A673 (cell line): ENCODE measurements at regions of chr12 and their contacts with region 1.

Region 1: DNA sequence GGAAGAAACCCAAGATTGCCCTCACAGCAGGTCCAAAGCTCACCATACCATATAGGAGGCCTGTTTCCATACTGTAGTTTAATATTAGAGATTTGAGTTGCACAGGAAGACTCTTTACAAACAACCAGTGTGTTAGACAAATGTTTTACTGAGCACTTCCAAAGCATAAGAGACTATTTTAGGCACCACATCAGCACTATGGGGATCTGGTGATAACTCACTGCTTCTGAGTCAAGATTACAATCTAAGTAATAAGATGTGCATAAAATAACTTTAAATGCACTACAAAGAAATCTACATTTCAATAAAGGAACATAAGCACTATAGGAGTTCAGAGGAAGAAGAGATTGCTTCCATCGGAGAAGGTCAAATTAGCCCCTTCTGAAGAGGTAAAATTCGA is 71.4 kb downstream of the SPPL3 start:
- DNase-seq: no peak
- H3K4me3 ChIP-seq: no peak overlapping the region
- H3K27ac ChIP-seq: no peak overlapping the region
- H3K4me1 ChIP-seq: peaks cover 27% of the 10 kb centered on the region
- H3K27me3 ChIP-seq: no peaks in the 10 kb centered on the region
- CTCF ChIP-seq: no peak

Region 2: DNA sequence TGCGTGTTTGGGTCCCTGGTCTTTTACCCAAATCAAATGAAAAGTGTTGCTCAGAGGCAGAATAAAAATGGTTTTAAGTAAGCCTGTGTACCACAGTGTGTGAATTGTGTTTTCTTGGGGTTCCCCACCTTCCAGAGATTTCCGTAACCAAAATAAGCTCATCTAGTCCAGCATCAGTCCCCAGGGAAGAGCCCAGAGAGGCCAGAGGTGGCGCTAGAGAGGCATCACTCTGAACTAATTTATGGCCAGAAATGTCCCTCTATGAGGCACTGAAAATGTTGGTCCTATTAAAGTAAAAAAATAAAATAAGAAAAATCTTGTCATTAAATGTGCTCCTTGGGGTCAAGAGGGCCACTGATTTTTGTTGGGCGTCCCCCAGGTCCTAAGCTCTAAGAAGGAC is 1189.8 kb before region 1 on chr12:
- CTCF ChIA-PET with region 1: interaction called, 16 read pairs
- POLR2A ChIA-PET with region 1: no interaction called
- intact Hi-C with region 1: no loop called
- DNase-seq: no peak
- H3K4me3 ChIP-seq: no peak overlapping the region
- H3K27ac ChIP-seq: no peak overlapping the region
- H3K4me1 ChIP-seq: no peaks in the 10 kb centered on the region
- H3K27me3 ChIP-seq: no peaks in the 10 kb centered on the region
- CTCF ChIP-seq: peak; percentile 59

Region 3: DNA sequence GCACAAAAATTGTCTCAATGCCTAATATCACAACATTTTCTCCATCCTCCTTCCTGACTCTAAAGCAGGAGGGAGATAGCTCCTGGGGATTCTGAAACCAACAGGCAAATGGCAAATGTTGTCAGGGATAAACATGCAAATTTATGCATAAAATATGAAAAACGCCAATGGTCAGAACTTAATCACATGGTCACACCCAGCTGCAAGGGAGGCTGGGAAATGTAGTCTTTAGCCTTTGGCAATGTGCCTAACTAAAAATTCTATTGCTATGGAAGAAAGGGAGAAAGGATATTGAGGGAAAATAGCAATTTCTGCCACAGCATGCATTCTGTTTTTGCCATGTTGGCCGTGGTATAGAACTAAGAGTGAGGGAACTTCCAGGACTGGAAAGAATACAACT is 218.0 kb after region 1 on chr12:
- CTCF ChIA-PET with region 1: no interaction called
- POLR2A ChIA-PET with region 1: no interaction called
- intact Hi-C with region 1: no loop called
- DNase-seq: peak; percentile 53
- H3K4me3 ChIP-seq: no peak overlapping the region
- H3K27ac ChIP-seq: no peak overlapping the region
- H3K4me1 ChIP-seq: no peaks in the 10 kb centered on the region
- H3K27me3 ChIP-seq: no peaks in the 10 kb centered on the region
- CTCF ChIP-seq: no peak